ENCODE measurements at regions of chr16 and their contacts with region 1.

Region 1: GRCh38 chr16:74813109-74813641 is 38.6 kb upstream of the FA2H start:
- DNase-seq: peak; percentile 72
- ATAC-seq: peak; percentile 98 to 100

Region 2: DNA sequence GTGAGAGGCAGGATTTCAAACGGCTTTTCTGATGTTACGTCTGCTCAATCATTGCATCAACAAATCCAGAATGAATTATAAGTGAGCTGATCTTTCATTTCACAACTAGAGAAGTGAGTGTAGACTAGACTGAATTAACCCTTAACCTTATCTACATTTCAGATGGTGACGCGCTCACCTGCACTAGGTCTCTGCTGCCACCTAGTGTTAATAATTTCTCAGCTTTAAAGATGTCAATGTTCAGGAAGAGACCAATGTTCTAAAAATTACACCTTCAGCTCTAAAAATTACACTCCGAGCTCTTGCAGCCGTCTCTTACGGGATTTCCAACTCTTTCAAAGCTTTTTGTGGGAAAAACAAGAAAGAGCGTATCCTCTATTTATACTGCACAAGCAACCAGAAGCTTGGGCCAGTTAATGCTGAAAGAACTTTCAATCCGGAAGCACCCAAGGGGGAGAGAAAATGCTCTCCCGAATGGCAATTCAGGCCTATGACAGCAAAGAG is 49.6 kb after region 1 on chr16:
- intact Hi-C with region 1: loop called in 1 of 2 experiments (anchors 2 kb)
- DNase-seq: no peak
- ATAC-seq: peak in 1 of 2 donors; percentile 52